ENCODE measurements at regions of chr19 and their contacts with region 1.

Region 1: DNA sequence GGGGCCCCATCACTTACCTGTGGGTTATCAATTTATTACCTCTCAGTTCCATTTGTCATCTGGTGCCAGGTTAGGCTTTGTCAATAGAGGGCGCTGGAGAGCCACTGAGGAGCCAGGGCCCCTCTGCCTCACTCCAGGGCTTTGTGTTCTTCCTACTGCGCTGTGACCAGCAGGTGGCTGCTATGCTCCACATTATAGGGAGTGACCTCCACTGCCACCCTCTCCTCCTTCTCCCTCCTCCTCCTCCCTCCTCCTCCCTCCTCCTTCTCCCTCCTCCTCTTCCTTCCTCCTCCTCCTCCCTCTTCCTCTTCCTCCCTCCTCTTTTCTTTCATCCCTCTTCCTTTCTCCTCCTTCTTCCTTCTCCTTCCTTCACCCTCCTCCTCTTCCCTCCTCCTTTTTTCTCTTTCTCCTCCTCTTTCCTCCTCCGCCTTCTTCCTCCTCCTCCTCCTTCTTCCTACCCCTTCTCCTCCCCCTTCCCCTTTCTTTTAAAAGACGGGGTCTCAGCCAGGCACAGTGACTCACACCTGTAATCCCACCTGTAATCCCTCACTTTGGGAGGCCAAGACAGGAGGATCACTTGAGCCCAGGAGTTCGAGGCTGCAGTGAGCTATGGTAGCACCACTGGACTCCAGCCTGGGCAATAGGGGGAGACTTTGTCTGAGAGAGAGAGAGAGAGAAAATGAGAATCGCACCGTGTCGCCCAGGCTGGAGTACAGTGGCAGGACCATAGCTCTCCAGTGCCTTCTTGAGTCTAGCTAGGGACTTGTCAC is 10.3 kb upstream of the ZBTB32 start:
- DNase-seq: peak; percentile 95
- ATAC-seq: peak; percentile 97
- H3K4me3 Mint-ChIP-seq: no peak overlapping the region
- H3K27ac Mint-ChIP-seq: peak overlapping the region; percentile 43
- H3K4me1 Mint-ChIP-seq: peaks cover 17% of the 10 kb centered on the region
- H3K27me3 Mint-ChIP-seq: no peaks in the 10 kb centered on the region

Region 2: DNA sequence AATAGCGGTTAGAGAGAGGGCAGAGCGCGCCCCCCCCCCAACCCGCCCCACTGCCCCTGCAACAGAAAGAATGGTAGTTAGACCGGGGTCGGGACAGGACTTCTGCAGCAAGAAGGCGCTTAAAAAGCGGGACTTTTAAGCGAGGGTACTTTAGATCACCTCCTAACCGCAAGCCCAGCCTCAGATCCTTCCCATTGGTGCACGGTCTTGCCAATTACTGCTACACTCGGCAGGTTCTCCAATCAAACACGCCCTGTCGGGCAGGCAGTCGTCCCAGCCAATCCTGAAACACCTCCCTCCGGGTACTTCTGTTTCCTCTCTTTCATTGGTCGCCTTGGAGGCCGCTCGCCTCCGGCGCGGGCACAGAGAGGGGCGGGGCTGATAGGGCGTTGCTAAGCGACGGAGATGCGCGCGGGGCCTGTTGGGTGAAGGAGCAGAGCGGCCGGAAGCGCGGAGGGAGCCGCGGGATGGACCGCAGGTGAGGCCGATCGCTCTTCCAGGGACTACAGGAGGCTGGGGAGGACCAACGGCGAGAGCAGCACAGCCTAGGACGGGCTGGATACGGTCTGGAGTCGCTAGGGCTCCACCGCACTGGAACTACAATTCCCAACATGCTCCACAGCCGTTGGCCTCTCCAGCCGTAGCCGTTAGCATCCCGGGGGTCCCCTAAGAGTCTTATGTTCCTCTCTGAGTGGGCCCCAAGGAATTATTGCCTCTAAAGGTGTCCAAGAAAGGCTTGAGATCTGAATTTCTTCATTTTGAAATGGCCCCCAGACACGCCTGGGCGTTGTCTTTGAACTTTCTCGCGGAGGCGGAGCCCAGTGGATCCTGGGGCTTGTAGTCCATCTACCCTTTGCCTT is 64.0 kb after region 1 on chr19 and contains the start of gene PROSER3:
- CTCF ChIA-PET with region 1: interaction called, 4 read pairs
- POLR2A ChIA-PET with region 1: no interaction called
- intact Hi-C with region 1: loop called in 1 of 2 experiments (anchors 1 kb)
- DNase-seq: peak; percentile 99
- ATAC-seq: peak; percentile 98
- H3K4me3 Mint-ChIP-seq: peak within 1 kb of the TSS; percentile 85
- H3K27ac Mint-ChIP-seq: peak within 1 kb of the TSS; percentile 91
- H3K4me1 Mint-ChIP-seq: peaks cover 29% of the 10 kb centered on the region
- H3K27me3 Mint-ChIP-seq: peaks cover 4% of the 10 kb centered on the region
- total RNA-seq, gene PROSER3: 39.8 to 62.8 TPM

Region 3: GRCh38 chr19:35822579-35822978 is 128.6 kb after region 1 on chr19:
- CTCF ChIA-PET with region 1: interaction called, 16 read pairs
- POLR2A ChIA-PET with region 1: no interaction called
- intact Hi-C with region 1: loop called (anchors 1 kb)
- DNase-seq: no peak
- ATAC-seq: no peak
- H3K4me3 Mint-ChIP-seq: no peak overlapping the region
- H3K27ac Mint-ChIP-seq: no peak overlapping the region
- H3K4me1 Mint-ChIP-seq: peaks cover 3% of the 10 kb centered on the region
- H3K27me3 Mint-ChIP-seq: peaks cover 18% of the 10 kb centered on the region

Region 4: DNA sequence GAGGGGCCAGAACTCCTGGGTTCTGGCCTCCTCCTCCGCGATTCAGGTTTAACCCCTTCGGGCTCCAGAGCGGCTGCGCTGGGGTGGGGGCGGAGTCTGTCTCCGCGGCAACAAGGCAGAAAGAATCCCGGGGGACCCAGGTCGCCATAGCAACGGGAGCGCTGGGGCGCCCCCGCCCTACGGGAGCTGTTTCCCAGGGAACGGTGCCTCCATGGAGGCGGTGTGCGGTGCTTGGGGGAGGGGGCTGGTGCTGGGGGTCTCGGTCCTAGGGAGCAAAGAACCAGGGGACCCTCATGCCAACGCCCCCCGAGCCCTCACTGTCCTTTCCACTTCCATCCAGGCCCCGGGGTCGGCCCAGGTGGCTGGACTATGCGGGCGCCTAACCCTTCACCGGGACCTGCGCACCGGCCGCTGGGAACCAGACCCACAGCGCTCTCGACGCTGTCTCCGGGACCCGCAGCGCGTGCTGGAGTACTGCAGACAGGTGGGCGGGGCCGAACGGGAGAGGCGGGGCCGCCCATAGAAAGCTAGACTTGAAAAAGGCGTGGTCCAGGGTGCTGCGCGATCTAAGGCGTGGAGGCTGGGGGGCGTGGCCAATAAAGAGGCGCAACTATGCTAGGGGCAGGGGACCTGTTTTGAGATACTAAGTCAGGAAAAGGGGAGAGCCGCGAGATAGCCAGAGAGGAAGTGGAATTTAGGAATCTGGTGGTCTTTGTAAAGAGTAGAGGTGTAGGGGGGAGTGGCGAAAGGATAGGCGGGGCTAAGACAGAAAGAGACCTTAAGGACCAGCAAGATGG is 175.5 kb after region 1 on chr19:
- CTCF ChIA-PET with region 1: interaction called, 7 read pairs
- POLR2A ChIA-PET with region 1: no interaction called
- intact Hi-C with region 1: loop called in 1 of 2 experiments (anchors 5 kb)
- DNase-seq: peak; percentile 95
- ATAC-seq: peak; percentile 93
- H3K4me3 Mint-ChIP-seq: peak overlapping the region; percentile 52
- H3K27ac Mint-ChIP-seq: no peak overlapping the region
- H3K4me1 Mint-ChIP-seq: peaks cover 14% of the 10 kb centered on the region
- H3K27me3 Mint-ChIP-seq: peaks cover 37% of the 10 kb centered on the region

Region 5: DNA sequence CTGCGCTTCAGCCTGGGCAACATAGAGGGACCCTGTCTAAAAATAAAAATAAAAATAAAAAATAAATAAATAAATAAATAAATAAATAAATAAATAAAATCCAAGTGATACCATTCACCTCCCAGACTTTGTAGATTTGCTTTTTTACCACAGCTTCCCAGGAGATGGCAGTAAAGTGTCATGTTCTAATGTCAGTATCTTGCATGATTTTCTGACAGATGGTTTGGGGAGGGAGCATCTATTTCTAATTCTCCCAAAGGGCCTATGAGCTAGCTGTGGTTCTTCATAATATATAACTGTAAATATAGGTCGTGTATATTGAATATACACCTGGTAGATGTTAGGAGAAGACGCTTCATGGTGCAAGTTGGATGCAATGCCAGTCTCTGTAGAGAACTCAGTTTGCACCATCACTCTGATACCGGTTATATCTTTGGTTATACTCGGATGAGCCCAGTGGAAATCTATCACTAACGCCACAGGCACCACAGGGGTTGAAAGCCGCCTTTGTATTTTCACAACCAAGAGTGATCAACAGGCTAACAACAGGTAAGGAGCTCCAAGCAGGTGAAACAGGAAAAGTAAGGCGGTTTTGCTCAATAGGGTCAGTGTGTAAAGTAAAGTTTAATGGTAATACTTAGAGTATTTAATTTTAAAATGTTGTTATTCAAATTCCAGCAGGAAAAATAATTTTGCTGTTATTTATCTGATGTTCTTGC is 188.3 kb after region 1 on chr19:
- CTCF ChIA-PET with region 1: no interaction called
- POLR2A ChIA-PET with region 1: no interaction called
- intact Hi-C with region 1: loop called in 1 of 2 experiments (anchors 5 kb)
- DNase-seq: peak; percentile 35
- ATAC-seq: peak; percentile 53
- H3K4me3 Mint-ChIP-seq: no peak overlapping the region
- H3K27ac Mint-ChIP-seq: no peak overlapping the region
- H3K4me1 Mint-ChIP-seq: peaks cover 2% of the 10 kb centered on the region
- H3K27me3 Mint-ChIP-seq: peaks cover 12% of the 10 kb centered on the region

Measured in activated CD4-positive, alpha-beta T cell treated with anti-CD3 and anti-CD28 coated beads for 36 hours (primary cell).